ENCODE measurements at regions of chr4 and their contacts with region 1.

Region 1: DNA sequence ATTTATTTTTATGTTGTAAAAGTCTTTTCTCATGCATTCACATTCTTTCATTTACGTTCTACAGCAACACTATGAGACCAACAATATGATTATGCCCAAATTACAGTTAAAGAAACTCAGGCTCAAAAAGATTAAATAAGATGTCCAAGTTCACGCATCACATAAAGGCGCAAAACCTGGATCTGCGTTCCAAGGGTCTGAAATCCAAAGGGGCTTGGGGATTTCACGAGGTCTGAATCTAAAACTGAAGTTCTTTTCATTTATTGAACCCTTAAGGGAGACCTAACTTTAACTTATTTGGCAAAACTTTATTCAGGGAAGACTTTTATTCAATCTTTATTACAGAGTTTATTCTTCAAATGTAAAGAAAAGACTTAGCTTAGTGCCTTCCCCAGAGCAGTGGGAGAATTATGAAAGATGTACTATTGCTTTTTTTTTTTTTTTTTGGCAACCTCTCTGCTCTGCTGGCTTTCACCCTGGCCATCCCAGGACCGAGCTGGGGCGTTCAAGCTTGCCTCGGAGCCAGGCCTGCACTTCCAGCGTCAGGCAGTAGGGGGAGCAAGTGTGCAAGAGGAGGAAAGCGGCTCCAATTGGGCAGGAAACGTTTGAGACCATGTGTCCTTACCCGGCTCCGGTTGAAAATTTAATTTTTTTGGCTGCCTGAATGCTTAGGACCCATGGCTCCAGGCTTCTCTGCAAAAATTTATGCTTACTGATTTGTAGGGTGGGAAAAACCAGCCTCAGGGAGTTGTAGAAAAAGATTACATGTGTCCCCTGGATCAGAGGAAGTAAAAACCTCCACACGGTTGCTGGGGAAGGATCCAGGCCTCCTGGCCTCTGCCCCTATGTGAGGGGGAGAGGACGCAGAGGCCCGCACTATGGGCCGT is 344.3 kb upstream of the KLF3 start:
- DNase-seq: peak; percentile 60 to 97 (median 84)
- ATAC-seq: peak; percentile 73 to 86 (median 79)
- H3K4me3 ChIP-seq: peak overlapping the region; percentile 50 to 65
- H3K4me3 Mint-ChIP-seq: peak overlapping the region; percentile 71 to 83 (median 79)
- H3K27ac ChIP-seq: peak overlapping the region; percentile 69
- H3K27ac Mint-ChIP-seq: peak overlapping the region; percentile 95
- H3K4me1 ChIP-seq: peaks cover 26 to 34% of the 10 kb centered on the region in 2 experiments
- H3K4me1 Mint-ChIP-seq: peaks cover 45 to 74% (median 57%) of the 10 kb centered on the region in 3 donors
- H3K27me3 ChIP-seq: no peaks in the 10 kb centered on the region
- H3K27me3 Mint-ChIP-seq: no peaks in the 10 kb centered on the region

Region 2: GRCh38 chr4:38675146-38676121 is 355.7 kb after region 1 on chr4:
- CTCF ChIA-PET with region 1: interaction called, 6 to 41 read pairs
- POLR2A ChIA-PET with region 1: interaction called, 3 to 9 read pairs
- DNase-seq: peak; percentile 55 to 94 (median 78)
- ATAC-seq: peak; percentile 51 to 65 (median 58)
- H3K4me3 ChIP-seq: no peak overlapping the region
- H3K4me3 Mint-ChIP-seq: peak overlapping the region; percentile 70 to 97 (median 82)
- H3K27ac ChIP-seq: peak overlapping the region; percentile 72
- H3K27ac Mint-ChIP-seq: peak overlapping the region; percentile 94 to 96
- H3K4me1 ChIP-seq: peaks cover 60 to 72% of the 10 kb centered on the region in 2 experiments
- H3K4me1 Mint-ChIP-seq: peaks cover 87 to 98% (median 94%) of the 10 kb centered on the region in 3 donors
- H3K27me3 ChIP-seq: no peaks in the 10 kb centered on the region
- H3K27me3 Mint-ChIP-seq: no peaks in the 10 kb centered on the region

Measured in T-cell (primary cell).